Naive thymus-derived CD4-positive, alpha-beta T cell (primary cell): ENCODE measurements at regions of chr5 and their contacts with region 1.

Region 1: DNA sequence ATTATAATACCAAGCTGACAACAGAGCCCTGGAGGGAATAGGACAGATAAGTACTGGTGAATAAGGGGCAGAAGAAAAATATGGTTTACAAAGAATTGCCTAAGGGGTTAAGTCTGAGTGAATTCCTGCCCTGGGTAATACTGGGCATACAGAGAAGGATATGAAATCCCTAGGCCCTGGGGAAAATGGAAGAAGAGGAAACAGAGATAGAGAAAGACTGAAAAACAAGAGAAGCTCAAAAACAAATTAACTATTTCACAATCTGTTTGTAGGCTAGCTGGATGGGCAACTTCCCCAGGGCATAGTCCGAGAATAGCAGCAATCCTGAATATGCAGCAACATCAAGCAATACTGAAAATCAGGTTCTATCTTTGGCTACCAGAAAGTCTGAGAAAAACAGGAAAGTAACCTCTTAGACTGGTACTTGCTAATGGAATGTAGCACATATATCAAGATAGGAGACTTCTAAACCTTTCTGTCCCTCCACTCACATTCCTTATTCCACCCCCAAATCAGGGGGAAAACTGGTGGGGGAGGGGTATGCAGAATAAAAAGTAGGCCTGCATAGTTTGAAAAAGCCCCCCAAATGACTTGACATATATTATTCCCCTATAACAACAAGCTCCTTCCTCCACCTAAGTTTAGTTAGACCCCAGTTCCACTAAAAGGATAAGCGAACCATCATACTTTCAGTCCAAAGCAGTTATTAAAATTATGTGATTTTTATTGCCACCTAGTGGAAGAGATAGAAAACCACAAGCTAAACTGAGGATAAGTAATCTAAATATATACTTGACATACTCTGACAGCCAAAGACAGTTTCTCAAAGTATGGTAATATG is 20.6 kb downstream of the SLC38A9 start:
- DNase-seq: peak in 6 of 9 donors; percentile 35 to 59 (median 48)
- ATAC-seq: peak; percentile 65
- H3K4me3 ChIP-seq: no peak overlapping the region
- H3K4me3 Mint-ChIP-seq: no peak overlapping the region
- H3K27ac ChIP-seq: no peak overlapping the region
- H3K27ac Mint-ChIP-seq: no peak overlapping the region
- H3K4me1 ChIP-seq: peaks cover 0 to 3% of the 10 kb centered on the region in 2 donors
- H3K4me1 Mint-ChIP-seq: peaks cover 0 to 22% (median 6%) of the 10 kb centered on the region in 7 donors
- H3K27me3 ChIP-seq: no peaks in the 10 kb centered on the region
- H3K27me3 Mint-ChIP-seq: no peaks in the 10 kb centered on the region

Region 2: GRCh38 chr5:55191165-55191564 is 500.3 kb before region 1 on chr5:
- CTCF ChIA-PET with region 1: no interaction called
- POLR2A ChIA-PET with region 1: no interaction called
- intact Hi-C with region 1: no loop called
- DNase-seq: no peak
- ATAC-seq: no peak
- H3K4me3 ChIP-seq: no peak overlapping the region
- H3K4me3 Mint-ChIP-seq: no peak overlapping the region
- H3K27ac ChIP-seq: no peak overlapping the region
- H3K27ac Mint-ChIP-seq: no peak overlapping the region
- H3K4me1 ChIP-seq: no peaks in the 10 kb centered on the region
- H3K4me1 Mint-ChIP-seq: no peaks in the 10 kb centered on the region
- H3K27me3 ChIP-seq: peaks cover 0 to 5% of the 10 kb centered on the region in 2 donors
- H3K27me3 Mint-ChIP-seq: peaks cover 48 to 82% (median 73%) of the 10 kb centered on the region in 5 donors

Region 3: GRCh38 chr5:55220391-55221185 is 470.9 kb before region 1 on chr5:
- CTCF ChIA-PET with region 1: no interaction called
- POLR2A ChIA-PET with region 1: no interaction called
- intact Hi-C with region 1: no loop called
- DNase-seq: peak in 1 of 9 donors; percentile 32
- ATAC-seq: peak; percentile 36
- H3K4me3 ChIP-seq: peak overlapping the region; percentile 35
- H3K4me3 Mint-ChIP-seq: peak overlapping the region; percentile 56 to 79 (median 70)
- H3K27ac ChIP-seq: no peak overlapping the region
- H3K27ac Mint-ChIP-seq: peak overlapping the region in 1 of 9 donors; percentile 26
- H3K4me1 ChIP-seq: peaks cover 8 to 16% of the 10 kb centered on the region in 2 donors
- H3K4me1 Mint-ChIP-seq: peaks cover 13 to 39% (median 27%) of the 10 kb centered on the region in 7 donors
- H3K27me3 ChIP-seq: peaks cover 2 to 46% of the 10 kb centered on the region in 2 donors
- H3K27me3 Mint-ChIP-seq: peaks cover 66 to 86% (median 75%) of the 10 kb centered on the region in 5 donors

Region 4: DNA sequence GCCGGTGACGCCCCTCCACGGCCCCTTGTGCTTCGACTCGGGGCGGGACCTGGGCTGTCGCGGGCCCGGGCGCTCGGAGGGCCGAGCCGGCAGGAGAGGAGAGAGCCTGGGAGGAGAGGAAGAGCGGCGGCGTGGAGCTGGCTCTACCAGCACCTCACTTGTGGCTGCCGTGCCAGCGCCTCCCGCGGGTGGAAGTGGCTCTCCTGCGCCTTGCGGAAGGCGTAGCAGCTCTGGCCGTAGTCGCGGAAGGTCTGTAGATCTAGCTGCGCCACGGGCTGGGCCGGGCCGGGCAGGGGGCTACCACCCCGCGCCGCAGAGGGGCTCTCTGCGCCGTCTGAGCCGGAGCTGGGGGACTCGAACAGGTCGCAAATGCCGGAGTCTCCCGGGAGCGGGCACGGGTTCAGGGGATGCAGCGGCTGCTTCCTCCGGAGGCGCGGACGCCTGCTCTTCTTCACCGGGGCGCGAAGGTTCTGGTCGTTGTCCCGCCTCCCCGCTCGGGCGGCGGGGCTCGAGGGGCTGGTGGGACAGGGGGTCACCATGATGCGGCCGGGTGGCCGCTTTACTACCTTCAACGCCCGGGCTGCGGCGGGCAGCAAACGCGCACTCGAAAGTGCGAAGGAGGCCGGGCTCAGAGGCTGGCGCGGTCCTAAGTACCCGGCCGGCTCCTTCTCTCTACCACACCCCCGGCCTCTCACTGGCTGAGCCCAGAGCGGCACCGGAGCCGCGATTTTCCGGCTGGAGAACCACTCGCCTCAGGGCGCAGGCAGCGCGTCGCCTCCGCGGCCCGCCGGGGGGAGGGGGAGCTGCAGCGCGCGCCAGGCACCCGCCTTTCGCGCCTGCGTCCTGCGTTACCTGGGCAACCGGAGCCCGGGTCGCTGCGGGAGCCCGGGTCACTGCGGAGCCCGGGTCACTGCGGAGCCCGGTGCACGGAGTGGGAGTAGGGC is 458.2 kb before region 1 on chr5 and contains the start of gene CCNO:
- CTCF ChIA-PET with region 1: no interaction called
- POLR2A ChIA-PET with region 1: no interaction called
- intact Hi-C with region 1: loop called in 1 of 2 experiments (anchors 5 kb)
- DNase-seq: peak in 8 of 9 donors; percentile 30 to 76 (median 50)
- ATAC-seq: peak; percentile 78
- H3K4me3 ChIP-seq: peak within 1 kb of the TSS; percentile 59
- H3K4me3 Mint-ChIP-seq: peak within 1 kb of the TSS; percentile 81 to 94 (median 86)
- H3K27ac ChIP-seq: no peak within 1 kb of the TSS
- H3K27ac Mint-ChIP-seq: peak within 1 kb of the TSS in 3 of 9 donors; percentile 25 to 41 (median 38)
- H3K4me1 ChIP-seq: peaks cover 22 to 27% of the 10 kb centered on the region in 2 donors
- H3K4me1 Mint-ChIP-seq: peaks cover 19 to 46% (median 29%) of the 10 kb centered on the region in 7 donors
- H3K27me3 ChIP-seq: peaks cover 9 to 35% of the 10 kb centered on the region in 2 donors
- H3K27me3 Mint-ChIP-seq: peaks cover 69 to 87% (median 76%) of the 10 kb centered on the region in 5 donors
- total RNA-seq, gene CCNO: not detected

Region 5: GRCh38 chr5:55324815-55325418 is 366.6 kb before region 1 on chr5:
- CTCF ChIA-PET with region 1: interaction called, 3 read pairs
- POLR2A ChIA-PET with region 1: no interaction called
- intact Hi-C with region 1: loop called (anchors 1 kb)
- DNase-seq: peak in 6 of 9 donors; percentile 8 to 54 (median 36)
- ATAC-seq: peak; percentile 77
- H3K4me3 ChIP-seq: no peak overlapping the region
- H3K4me3 Mint-ChIP-seq: no peak overlapping the region
- H3K27ac ChIP-seq: no peak overlapping the region
- H3K27ac Mint-ChIP-seq: peak overlapping the region in 2 of 9 donors; percentile 4 to 34
- H3K4me1 ChIP-seq: peaks cover 0 to 3% of the 10 kb centered on the region in 2 donors
- H3K4me1 Mint-ChIP-seq: peaks cover 8 to 44% (median 35%) of the 10 kb centered on the region in 7 donors
- H3K27me3 ChIP-seq: no peaks in the 10 kb centered on the region
- H3K27me3 Mint-ChIP-seq: no peaks in the 10 kb centered on the region

Region 6: GRCh38 chr5:55344392-55344992 is 347.0 kb before region 1 on chr5:
- CTCF ChIA-PET with region 1: interaction called, 15 read pairs
- POLR2A ChIA-PET with region 1: no interaction called
- intact Hi-C with region 1: loop called (anchors 1 kb)
- DNase-seq: peak; percentile 18 to 60 (median 47)
- ATAC-seq: peak; percentile 79
- H3K4me3 ChIP-seq: no peak overlapping the region
- H3K4me3 Mint-ChIP-seq: no peak overlapping the region
- H3K27ac ChIP-seq: no peak overlapping the region
- H3K27ac Mint-ChIP-seq: no peak overlapping the region
- H3K4me1 ChIP-seq: no peaks in the 10 kb centered on the region
- H3K4me1 Mint-ChIP-seq: peaks cover 2 to 11% (median 3%) of the 10 kb centered on the region in 7 donors
- H3K27me3 ChIP-seq: no peaks in the 10 kb centered on the region
- H3K27me3 Mint-ChIP-seq: no peaks in the 10 kb centered on the region

Region 7: GRCh38 chr5:55407059-55407684 is 284.3 kb before region 1 on chr5:
- CTCF ChIA-PET with region 1: interaction called, 22 read pairs
- POLR2A ChIA-PET with region 1: no interaction called
- intact Hi-C with region 1: loop called (anchors 1 kb)
- DNase-seq: peak in 6 of 9 donors; percentile 4 to 34 (median 16)
- ATAC-seq: peak; percentile 42
- H3K4me3 ChIP-seq: no peak overlapping the region
- H3K4me3 Mint-ChIP-seq: no peak overlapping the region
- H3K27ac ChIP-seq: no peak overlapping the region
- H3K27ac Mint-ChIP-seq: peak overlapping the region in 2 of 9 donors; percentile 20 to 36
- H3K4me1 ChIP-seq: no peaks in the 10 kb centered on the region
- H3K4me1 Mint-ChIP-seq: peaks cover 6 to 23% (median 12%) of the 10 kb centered on the region in 7 donors
- H3K27me3 ChIP-seq: no peaks in the 10 kb centered on the region
- H3K27me3 Mint-ChIP-seq: no peaks in the 10 kb centered on the region